Posterior vena cava (tissue), 2 donors: ENCODE measurements at regions of chr1 and their contacts with region 1.

Region 1: DNA sequence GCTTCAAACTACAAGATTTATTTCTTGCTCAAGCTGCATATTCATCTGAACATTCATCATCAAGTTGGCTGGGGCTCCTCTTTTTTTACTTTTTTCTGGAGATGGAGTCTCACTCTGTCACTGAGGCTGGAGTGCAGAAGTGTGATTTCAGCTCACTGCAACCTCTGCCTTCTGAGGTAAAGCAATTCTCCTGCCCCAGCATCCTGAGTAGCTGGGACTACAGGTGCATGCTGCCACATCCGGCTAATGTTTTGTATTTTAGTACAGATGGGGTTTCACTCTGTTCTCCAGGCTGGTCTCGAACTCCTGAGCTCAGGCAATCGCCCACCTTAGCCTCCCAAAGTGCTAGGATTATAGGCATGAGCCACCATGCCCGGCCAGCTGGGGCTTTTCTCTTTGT is 88.3 kb upstream of the C1orf105 start:
- DNase-seq: no peak

Region 2: DNA sequence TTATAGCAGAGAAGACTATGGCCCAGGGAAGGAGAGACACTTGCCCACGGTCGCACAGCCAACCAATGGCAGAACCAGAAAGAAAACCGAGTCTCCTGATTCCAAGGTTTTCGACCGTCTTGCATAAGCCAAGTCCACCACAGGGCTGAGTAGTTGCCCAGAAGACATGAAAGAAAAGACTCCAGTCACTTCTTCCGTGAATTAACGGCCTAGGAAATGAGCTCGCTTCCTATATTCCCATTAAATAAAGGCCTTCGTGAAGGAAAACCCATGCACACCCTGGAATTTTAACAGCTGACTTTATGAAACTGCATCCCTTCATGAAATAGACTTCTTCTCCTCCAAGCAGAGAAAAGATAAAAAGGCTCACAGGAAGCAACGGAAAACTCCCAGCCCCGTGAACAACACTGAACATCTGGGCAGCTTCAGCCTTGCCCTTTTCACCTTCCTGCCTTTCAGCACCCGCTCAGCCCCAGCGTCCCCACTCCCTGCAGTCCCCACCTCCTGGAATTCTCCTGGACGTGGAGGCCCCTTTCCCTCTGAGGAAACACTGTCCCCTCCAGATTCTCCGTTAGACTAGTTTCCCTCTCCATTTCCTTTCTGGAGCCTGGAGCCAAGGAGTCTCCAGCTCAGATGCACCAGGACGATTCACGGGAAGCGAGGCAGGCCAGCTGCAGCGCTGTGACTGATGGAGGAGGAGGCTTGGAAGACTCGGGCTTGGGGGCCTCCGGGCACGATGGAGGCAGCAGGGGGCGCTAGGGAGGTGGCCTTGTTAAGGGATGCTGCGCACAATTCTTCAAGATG is 677.1 kb before region 1 on chr1:
- intact Hi-C with region 1: loop called in 1 of 2 experiments (anchors 5 kb)
- DNase-seq: peak; percentile 94

Region 3: GRCh38 chr1:172398970-172399755 is 66.9 kb after region 1 on chr1:
- intact Hi-C with region 1: no loop called
- DNase-seq: peak; percentile 82

Region 4: DNA sequence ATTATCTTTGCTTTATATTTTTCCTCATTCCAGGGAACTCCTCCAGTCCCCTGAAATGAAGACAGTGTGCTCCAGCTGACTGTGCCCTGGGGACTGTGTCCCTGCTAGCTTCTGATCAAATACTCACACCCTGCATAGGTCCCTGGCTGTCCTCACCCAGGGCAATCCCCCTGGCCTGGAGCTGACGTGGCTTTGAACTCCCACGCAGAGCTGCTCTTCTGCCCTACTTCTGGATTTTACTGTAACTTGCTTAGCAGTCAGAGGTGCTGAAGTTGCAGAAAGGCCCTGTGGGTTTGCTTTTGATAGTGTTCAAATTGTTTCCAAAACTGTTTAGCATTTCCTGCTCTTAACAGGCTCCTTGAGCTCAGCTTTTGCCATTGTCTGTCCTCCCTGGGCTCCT is 513.1 kb after region 1 on chr1:
- intact Hi-C with region 1: no loop called
- DNase-seq: no peak

Region 5: GRCh38 chr1:173970252-173970651 is 1638.0 kb after region 1 on chr1:
- intact Hi-C with region 1: no loop called
- DNase-seq: no peak